Ovary (tissue), 10 donors: ENCODE measurements at regions of chr3 and their contacts with region 1.

Region 1: GRCh38 chr3:143951351-143951971 is 20.2 kb upstream of the DIPK2A start:
- DNase-seq: peak in 2 of 5 donors; percentile 23 to 30
- H3K4me3 ChIP-seq: no peak overlapping the region
- H3K27ac ChIP-seq: no peak overlapping the region
- H3K4me1 ChIP-seq: no peaks in the 10 kb centered on the region
- H3K27me3 ChIP-seq: no peaks in the 10 kb centered on the region
- CTCF ChIP-seq: peak in 1 of 3 donors; percentile 58
- EP300 ChIP-seq: no peak
- POLR2A ChIP-seq: no peak

Region 2: DNA sequence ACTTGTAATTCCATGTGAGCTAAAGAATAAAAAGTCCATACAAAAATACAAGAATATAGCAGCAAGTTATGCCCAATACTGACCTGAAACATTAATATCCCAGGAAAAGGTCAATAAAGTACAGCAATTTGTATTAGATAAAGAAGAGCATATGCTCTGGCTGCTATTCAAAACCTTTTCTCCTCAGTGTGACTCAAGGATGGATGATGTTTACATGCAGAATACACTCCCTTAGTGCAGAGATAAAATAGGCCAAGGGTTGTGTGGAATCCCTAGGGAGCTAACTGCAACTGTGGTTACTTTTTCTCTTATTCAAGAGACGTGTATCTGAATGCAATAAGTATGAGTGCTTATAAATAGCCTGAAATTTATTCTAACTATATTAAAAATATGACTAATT is 181.8 kb before region 1 on chr3:
- intact Hi-C with region 1: loop called in 1 of 4 experiments (anchors 5 kb)
- DNase-seq: no peak
- H3K4me3 ChIP-seq: no peak overlapping the region
- H3K27ac ChIP-seq: peak overlapping the region in 1 of 2 donors; percentile 5
- H3K4me1 ChIP-seq: peaks cover 6% of the 10 kb centered on the region
- H3K27me3 ChIP-seq: no peaks in the 10 kb centered on the region
- CTCF ChIP-seq: no peak
- EP300 ChIP-seq: no peak
- POLR2A ChIP-seq: no peak

Region 3: GRCh38 chr3:143786219-143787191 is 165.0 kb before region 1 on chr3:
- intact Hi-C with region 1: loop called in 1 of 4 experiments (anchors 10 kb)
- DNase-seq: peak; percentile 16 to 69 (median 54)
- H3K4me3 ChIP-seq: peak overlapping the region; percentile 1
- H3K27ac ChIP-seq: peak overlapping the region in 1 of 2 donors; percentile 35
- H3K4me1 ChIP-seq: peaks cover 4% of the 10 kb centered on the region
- H3K27me3 ChIP-seq: no peaks in the 10 kb centered on the region
- CTCF ChIP-seq: no peak
- EP300 ChIP-seq: no peak
- POLR2A ChIP-seq: no peak